CD4-positive, alpha-beta T cell (primary cell): ENCODE measurements at regions of chr13 and their contacts with region 1.

Region 1: DNA sequence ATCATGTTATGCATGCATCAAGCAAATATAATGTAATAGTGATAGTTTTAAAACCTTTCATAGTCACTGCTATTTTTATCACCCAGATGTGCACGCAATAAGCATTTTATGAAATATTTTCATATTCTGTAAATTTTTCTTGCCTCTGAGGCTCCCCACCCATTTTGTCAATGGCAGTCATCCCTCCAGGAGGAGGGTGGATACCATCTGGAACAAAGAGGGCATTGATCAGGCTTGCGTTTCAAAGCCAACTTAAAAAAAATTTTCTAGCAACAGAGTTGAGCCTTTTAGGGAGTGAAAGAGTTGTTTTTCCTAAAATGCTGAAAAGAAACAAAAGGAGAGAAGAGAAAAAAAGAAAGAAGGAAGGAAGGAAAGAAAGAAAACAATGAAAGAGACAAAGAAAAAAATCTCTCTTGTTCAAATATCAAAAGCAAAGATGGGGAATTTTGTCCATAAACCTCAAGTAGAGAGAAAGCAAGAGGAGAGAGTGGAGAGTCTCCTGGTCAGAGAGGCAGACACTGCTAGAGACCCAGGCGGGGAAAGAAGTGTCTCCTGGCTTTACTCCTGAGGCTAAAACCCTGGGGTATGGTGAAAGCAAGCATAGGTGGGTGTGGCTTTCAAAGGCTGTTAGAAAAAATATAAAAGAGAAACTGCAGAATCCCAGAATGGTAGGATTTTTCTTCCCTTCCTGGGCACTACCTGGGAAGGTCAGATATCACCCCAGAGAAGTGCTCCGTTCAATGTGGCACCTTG is 63.6 kb upstream of the KLF12 start:
- DNase-seq: no peak
- ATAC-seq: no peak
- H3K4me3 ChIP-seq: no peak overlapping the region
- H3K4me3 Mint-ChIP-seq: no peak overlapping the region
- H3K27ac ChIP-seq: no peak overlapping the region
- H3K27ac Mint-ChIP-seq: no peak overlapping the region
- H3K4me1 ChIP-seq: no peaks in the 10 kb centered on the region
- H3K4me1 Mint-ChIP-seq: peaks cover 18% of the 10 kb centered on the region
- H3K27me3 ChIP-seq: no peaks in the 10 kb centered on the region
- H3K27me3 Mint-ChIP-seq: no peaks in the 10 kb centered on the region
- CTCF ChIP-seq: no peak

Region 2: GRCh38 chr13:74210693-74211393 is 13.0 kb after region 1 on chr13:
- CTCF ChIA-PET with region 1: no interaction called
- POLR2A ChIA-PET with region 1: no interaction called
- intact Hi-C with region 1: loop called in 1 of 2 experiments (anchors 2 kb)
- DNase-seq: peak in 1 of 14 experiments; percentile 10
- ATAC-seq: no peak
- H3K4me3 ChIP-seq: no peak overlapping the region
- H3K4me3 Mint-ChIP-seq: no peak overlapping the region
- H3K27ac ChIP-seq: no peak overlapping the region
- H3K27ac Mint-ChIP-seq: no peak overlapping the region
- H3K4me1 ChIP-seq: no peaks in the 10 kb centered on the region
- H3K4me1 Mint-ChIP-seq: peaks cover 4% of the 10 kb centered on the region
- H3K27me3 ChIP-seq: no peaks in the 10 kb centered on the region
- H3K27me3 Mint-ChIP-seq: no peaks in the 10 kb centered on the region
- CTCF ChIP-seq: no peak